ENCODE measurements at regions of chr19 and their contacts with region 1.

Region 1: GRCh38 chr19:7799640-7800355 is 30.2 kb upstream of the EVI5L start:
- DNase-seq: peak in 9 of 10 donors; percentile 46 to 81 (median 66)
- H3K4me3 ChIP-seq: peak overlapping the region in 58 of 59 donors; percentile 16 to 68 (median 44)
- H3K27ac ChIP-seq: peak overlapping the region in 21 of 59 donors; percentile 10 to 70 (median 39)
- H3K27me3 ChIP-seq: peaks cover 0 to 9% (median 0%) of the 10 kb centered on the region in 45 donors
- CTCF ChIP-seq: peak; percentile 44 to 85 (median 72)

Region 2: GRCh38 chr19:7104747-7105447 is 694.9 kb before region 1 on chr19:
- intact Hi-C with region 1: loop called in 1 of 2 experiments (anchors 5 kb)
- DNase-seq: peak in 1 of 10 donors; percentile 24
- H3K4me3 ChIP-seq: no peak overlapping the region
- H3K27ac ChIP-seq: no peak overlapping the region
- H3K27me3 ChIP-seq: no peaks in the 10 kb centered on the region
- CTCF ChIP-seq: no peak

Region 3: GRCh38 chr19:7349961-7350711 is 449.7 kb before region 1 on chr19:
- intact Hi-C with region 1: loop called (anchors 5 to 10 kb)
- DNase-seq: peak in 3 of 10 donors; percentile 2 to 15 (median 5)
- H3K4me3 ChIP-seq: no peak overlapping the region
- H3K27ac ChIP-seq: no peak overlapping the region
- H3K27me3 ChIP-seq: no peaks in the 10 kb centered on the region
- CTCF ChIP-seq: no peak

Region 4: GRCh38 chr19:7575434-7576040 is 224.3 kb before region 1 on chr19:
- intact Hi-C with region 1: loop called in 1 of 2 experiments (anchors 10 kb)
- DNase-seq: no peak
- H3K4me3 ChIP-seq: no peak overlapping the region
- H3K27ac ChIP-seq: no peak overlapping the region
- H3K27me3 ChIP-seq: no peaks in the 10 kb centered on the region
- CTCF ChIP-seq: no peak

Region 5: GRCh38 chr19:7652061-7652641 is 147.6 kb before region 1 on chr19:
- intact Hi-C with region 1: loop called (anchors 1 to 5 kb)
- DNase-seq: peak; percentile 65 to 85 (median 79)
- H3K4me3 ChIP-seq: peak overlapping the region in 54 of 59 donors; percentile 4 to 64 (median 44)
- H3K27ac ChIP-seq: peak overlapping the region in 4 of 59 donors; percentile 3 to 54 (median 18)
- H3K27me3 ChIP-seq: no peaks in the 10 kb centered on the region
- CTCF ChIP-seq: peak; percentile 89 to 99 (median 97)

Region 6: DNA sequence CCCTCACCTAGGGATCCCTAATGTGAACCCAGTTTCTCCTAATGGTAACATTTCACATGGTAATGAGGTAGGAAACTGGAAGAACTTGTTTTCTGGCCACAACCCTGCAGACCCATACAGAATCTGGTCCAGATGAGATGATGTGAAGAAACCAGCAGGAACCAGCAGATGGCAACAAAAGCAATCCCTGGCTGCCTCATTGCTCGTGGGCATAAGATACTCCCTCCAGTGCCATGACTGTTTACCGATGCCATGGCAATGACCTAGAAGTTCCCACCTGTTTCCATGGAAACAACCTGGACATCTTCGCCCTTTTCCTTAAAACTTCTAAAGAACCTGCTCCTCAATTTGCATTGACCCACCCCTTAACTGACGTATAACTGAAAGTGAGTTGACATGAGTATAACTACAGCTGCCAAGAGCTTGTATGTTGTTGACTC is 51.0 kb before region 1 on chr19:
- intact Hi-C with region 1: no loop called
- DNase-seq: no peak
- H3K4me3 ChIP-seq: no peak overlapping the region
- H3K27ac ChIP-seq: no peak overlapping the region
- H3K27me3 ChIP-seq: peaks cover 0 to 14% (median 0%) of the 10 kb centered on the region in 45 donors
- CTCF ChIP-seq: peak in 1 of 56 donors; percentile 9